AG04449 (cell line): ENCODE measurements at regions of chr19 and their contacts with region 1.

Region 1: GRCh38 chr19:7943444-7944176 is at the start of gene TIMM44:
- DNase-seq: peak; percentile 95
- H3K4me3 ChIP-seq: peak within 1 kb of the TSS; percentile 97
- CTCF ChIP-seq: no peak

Region 2: DNA sequence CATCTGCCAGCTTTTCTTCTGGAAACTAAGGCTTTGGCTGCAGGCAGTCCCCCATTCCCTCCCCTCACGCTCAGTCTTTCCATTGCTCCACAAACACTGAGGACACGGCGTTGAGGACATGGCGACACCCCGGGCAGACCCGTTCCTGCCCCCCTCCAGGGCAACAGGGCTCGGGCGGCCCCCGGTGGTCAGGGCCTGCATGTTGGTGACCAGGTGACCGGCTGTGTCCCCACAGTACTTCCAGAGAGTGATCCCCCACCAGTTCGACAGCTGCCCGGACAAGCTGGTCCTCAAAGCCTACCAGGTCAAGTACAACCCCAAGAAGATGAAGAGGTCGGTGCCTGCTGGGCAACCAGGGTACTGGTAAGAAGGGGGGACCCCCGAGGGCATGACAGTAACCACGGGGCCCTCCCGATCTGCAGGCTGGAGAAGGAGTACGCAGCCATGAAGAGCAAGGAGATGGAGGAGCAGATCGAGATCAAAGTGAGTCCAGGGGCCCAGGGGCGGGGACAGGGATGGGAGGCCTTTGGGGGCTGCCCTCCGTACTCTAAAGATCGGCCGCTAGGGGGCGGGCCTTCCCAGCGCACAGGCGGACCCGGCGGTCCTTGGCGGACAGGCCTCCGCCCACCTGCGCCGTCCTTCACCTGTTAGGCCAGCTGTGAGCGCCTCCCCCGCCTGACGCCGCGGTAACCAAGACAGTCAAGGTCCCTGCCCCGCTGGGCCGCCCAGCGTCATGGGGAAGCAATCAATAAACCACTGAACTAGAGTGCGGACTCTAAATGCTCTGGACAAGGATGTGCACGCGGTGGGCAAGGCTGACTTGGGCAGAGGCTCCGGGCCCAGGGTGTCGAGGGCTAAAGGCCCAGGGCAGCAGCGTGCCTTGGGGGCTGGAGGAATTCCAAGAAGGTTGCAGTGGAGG is 90.5 kb before region 1 on chr19:
- CTCF ChIA-PET with region 1: interaction called, 21 read pairs
- POLR2A ChIA-PET with region 1: no interaction called
- DNase-seq: no peak
- H3K4me3 ChIP-seq: no peak overlapping the region
- CTCF ChIP-seq: peak; percentile 86

Region 3: DNA sequence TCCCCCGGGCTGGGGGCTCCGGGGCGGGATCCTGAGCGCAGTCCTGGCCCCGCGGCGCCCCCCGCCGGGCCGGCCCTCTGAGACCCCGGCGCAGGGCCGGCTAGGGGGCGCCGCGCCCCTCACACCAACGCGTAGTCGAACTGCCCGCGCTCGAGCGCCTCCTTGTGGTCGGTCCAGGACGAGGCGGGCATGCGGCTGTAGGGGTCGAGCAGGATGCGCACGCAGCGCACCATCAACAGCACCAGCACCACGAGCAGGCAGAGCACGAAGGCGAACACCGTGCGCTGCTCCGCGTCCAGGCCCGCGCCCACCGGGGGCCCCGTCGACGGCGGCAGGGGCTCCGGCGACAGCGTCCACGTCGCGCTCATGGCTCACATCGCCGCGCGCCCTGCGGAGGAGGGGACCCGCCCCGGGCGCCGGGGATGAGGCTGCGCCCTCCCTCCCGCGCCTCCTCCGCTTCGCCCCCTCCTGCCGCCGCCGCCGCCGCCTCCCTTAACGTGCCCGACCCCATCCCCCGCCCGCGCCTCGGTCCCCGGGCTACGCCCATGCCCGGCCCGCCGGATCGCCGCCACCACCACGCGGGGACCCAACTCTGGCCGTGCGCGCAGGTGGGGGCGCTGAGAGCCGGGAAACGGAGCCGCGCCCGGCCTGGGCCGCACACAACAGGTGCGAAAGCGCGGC is 18.3 kb before region 1 on chr19:
- CTCF ChIA-PET with region 1: interaction called, 43 read pairs
- POLR2A ChIA-PET with region 1: interaction called, 10 read pairs
- DNase-seq: no peak
- H3K4me3 ChIP-seq: peak overlapping the region; percentile 49
- CTCF ChIP-seq: peak; percentile 96

Region 4: DNA sequence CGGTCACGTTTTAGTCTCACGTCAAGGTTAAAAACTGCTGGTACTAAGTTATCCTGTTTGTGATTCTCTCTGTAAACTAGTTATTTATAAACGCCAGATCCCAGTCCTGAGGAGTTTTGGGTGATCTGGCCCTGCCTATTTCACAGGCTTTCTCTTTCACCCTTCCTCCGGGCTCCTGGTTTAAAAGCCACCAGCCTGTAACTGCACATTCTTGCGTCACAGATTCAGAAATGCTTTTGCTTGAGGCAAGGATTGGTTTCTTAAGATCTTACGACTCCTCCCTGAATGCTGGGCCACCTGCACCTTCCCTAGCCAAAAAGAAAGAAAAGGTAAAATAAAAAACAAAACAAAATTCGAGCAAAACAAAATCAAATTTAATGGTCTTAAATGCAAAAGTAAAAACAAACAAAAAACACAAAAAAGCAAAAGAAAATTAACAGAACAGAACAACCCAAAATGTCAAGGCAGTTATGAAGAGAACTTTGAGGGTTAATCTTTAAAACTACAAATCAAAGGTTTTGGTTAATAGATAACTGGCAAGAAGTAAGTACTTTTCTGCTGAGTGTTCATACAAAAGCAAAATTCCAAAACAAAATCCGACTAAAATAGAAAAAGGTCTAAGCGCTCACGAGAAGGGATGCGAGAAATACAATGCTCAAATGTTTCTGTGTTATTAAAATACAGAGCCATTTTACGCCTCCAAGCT is 18.5 kb after region 1 on chr19:
- CTCF ChIA-PET with region 1: interaction called, 39 read pairs
- POLR2A ChIA-PET with region 1: no interaction called
- DNase-seq: no peak
- H3K4me3 ChIP-seq: no peak overlapping the region
- CTCF ChIP-seq: no peak

Region 5: GRCh38 chr19:7986321-7987083 is 42.9 kb after region 1 on chr19:
- CTCF ChIA-PET with region 1: interaction called, 11 read pairs
- POLR2A ChIA-PET with region 1: no interaction called
- DNase-seq: peak; percentile 10
- H3K4me3 ChIP-seq: no peak overlapping the region
- CTCF ChIP-seq: no peak

Region 6: DNA sequence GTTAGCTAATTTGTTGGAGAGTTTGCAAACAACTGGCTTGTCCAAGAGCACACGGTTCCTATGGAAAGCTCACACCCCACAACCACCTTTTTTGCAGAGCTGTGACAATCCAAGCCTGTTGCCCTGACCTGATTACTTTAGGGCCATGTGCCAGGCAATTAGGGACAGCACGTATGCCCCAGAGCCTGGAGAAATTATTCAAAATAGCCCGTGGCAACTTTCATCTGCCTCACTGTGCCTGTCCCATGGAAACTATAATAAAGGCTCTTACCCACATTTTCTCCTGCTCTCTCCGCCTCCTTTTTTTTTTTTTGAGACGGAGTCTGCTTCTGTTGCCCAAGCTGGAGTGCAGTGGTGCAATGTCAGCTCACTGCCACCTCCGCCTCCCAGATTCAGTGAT is 224.4 kb after region 1 on chr19:
- CTCF ChIA-PET with region 1: no interaction called
- POLR2A ChIA-PET with region 1: no interaction called
- DNase-seq: no peak
- H3K4me3 ChIP-seq: no peak overlapping the region
- CTCF ChIP-seq: no peak

Region 7: DNA sequence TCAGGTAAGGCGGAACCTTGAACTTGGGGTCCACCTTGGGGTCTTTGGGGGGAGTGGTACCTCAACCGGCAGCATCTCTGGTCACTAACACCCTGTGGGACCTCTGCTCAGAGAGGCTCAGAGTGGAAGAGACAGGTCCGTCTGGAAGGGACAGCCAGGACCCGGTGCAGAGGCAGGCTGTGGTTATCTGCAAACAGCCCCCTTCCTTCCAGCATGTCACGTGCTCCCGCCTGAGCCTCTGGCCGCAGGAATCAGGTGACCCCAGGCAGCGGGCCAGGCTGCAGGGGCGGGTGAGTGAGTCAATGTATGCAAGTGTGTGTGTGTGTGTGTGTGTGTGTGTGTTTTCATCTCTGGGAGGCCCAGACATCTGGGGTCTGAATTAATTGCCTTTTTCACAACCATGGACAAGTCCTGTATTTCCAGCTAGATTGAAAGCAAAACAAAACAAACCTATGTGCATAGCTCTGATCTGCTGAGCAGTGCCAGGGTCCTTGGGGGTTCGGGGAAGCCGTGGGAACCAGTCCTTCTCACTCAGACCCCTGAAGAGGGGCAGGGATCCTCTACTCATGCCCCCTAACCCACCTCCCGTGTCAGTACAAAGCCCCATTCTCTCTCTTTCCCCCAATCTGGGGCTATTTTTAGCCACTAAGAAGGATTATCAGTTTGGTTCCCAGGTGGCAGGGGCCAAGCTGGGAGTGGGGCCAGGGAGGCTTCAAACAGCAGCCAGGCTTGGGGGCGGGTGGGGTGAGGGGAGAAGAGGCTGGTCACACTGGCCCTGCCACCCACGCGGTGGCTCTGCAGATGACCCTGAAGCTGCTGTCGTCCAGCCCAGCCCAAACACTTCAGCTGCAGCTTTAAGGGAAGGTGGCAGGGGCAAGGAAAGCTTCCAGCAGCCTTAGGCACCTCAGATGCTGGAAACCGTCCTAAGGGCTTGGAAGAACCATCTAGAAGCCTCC is 296.9 kb after region 1 on chr19:
- CTCF ChIA-PET with region 1: interaction called, 20 read pairs
- POLR2A ChIA-PET with region 1: no interaction called
- DNase-seq: peak; percentile 65
- H3K4me3 ChIP-seq: no peak overlapping the region
- CTCF ChIP-seq: no peak

Region 8: GRCh38 chr19:8252922-8253589 is 309.4 kb after region 1 on chr19:
- CTCF ChIA-PET with region 1: interaction called, 160 read pairs
- POLR2A ChIA-PET with region 1: no interaction called
- DNase-seq: no peak
- H3K4me3 ChIP-seq: no peak overlapping the region
- CTCF ChIP-seq: peak; percentile 92